ENCODE measurements at regions of chr2 and their contacts with region 1.

Region 1: DNA sequence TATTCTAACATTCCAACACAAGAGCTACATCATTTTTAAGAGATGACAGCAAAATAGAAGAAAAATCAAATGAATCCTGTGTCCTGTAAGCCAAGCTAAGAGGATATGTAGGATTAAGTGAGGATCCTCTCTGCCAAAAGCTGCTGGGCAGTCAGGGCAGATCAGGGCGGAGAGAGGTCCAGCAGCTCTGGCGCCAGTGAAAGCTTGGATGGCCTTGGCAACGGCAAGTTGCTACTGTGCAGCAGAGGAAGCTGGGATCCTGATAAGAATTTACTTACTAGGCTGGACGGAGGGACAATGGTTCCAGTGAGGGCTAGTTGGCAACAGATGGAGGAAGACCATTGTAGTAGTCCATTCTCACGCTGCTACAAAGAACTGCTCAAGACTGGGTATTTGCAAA is 391.5 kb downstream of the XIRP2 start:
- DNase-seq: no peak

Region 2: DNA sequence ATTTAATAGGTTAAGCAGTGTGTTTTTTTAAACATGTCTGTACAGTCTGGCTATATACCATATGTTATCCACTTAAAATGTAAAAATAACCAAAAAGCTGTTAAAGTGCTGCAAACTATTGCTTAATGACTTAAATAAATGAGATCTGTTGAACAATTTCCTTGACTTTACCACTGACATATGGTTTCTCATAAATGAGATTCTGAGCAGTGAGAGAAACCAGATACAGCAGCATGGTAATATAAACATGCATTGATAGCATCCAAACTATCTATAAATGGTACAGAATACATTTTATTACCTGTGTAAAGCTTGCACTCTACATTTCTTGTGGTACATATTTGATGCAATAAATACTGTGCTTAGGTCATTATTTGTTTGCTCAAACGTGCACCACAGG is 1290.0 kb before region 1 on chr2:
- intact Hi-C with region 1: no loop called
- DNase-seq: no peak

Region 3: GRCh38 chr2:167181134-167181533 is 98.7 kb before region 1 on chr2:
- intact Hi-C with region 1: no loop called
- DNase-seq: no peak

Region 4: DNA sequence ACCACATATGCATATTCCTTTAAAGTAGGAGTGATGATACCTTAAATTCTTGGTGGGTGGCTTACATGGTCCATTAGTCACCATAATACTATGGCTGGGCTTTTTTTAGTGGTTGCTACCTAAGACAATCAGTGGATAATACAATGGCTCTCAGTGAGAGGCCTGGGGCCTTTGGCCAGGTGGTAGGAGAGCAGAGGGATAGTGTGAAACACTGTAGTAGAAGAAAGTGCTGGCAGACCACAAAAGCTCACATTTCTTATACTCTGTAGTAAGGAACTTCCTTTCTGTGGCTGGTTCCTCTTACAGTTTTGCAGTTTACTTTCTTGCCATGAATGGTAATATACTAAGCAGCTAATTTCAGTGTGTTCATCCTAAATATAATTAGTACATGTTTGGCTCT is 191.9 kb after region 1 on chr2:
- intact Hi-C with region 1: no loop called
- DNase-seq: no peak

Region 5: GRCh38 chr2:168652997-168653921 is 1373.4 kb after region 1 on chr2:
- intact Hi-C with region 1: loop called in 1 of 2 experiments (anchors 5 kb)
- DNase-seq: no peak